ENCODE measurements at regions of chr17 and their contacts with region 1.

Region 1: DNA sequence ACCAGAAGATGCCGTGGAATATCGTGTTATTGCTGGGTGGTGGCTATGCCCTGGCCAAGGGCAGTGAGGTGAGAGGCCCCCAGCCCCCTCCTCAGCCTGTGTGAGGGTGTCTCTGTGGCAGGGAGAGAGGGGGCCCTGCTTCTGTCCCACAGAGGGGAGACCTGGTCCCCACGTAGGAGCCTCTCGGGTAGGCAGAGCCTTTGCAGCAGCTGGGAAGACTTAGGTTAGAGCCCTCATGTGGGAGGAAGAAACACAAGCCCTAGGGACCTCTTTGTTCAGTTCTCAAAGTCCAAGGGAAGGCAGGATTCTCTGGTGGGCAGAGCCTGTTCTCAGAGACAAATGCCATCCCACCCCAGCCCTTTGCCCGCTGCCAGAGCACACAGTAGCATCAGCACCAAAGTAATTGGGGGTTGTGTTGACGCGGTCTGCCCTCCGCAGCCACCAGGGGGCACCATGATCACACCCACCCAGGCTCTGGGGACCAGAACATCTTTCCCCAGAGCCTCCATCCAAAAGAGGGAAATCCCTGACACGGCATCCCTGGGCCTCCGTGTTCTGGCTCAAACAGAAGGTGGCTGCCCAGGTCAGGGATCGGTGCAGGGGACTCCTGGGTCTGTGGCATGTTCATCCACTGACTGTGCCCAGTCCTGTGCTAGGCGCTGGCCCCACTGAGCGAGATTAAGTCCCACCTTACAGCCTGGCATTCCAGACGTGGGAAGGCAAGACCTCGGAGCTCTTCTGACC is 11.5 kb upstream of the FOXN1 start:
- DNase-seq: peak; percentile 60 to 88 (median 79)
- ATAC-seq: peak; percentile 91
- H3K4me3 ChIP-seq: no peak overlapping the region
- H3K4me3 Mint-ChIP-seq: no peak overlapping the region
- H3K27ac ChIP-seq: no peak overlapping the region
- H3K27ac Mint-ChIP-seq: no peak overlapping the region
- H3K4me1 ChIP-seq: no peaks in the 10 kb centered on the region
- H3K4me1 Mint-ChIP-seq: no peaks in the 10 kb centered on the region
- H3K27me3 ChIP-seq: no peaks in the 10 kb centered on the region
- H3K27me3 Mint-ChIP-seq: peaks cover 4% of the 10 kb centered on the region
- CTCF ChIP-seq: peak; percentile 71

Region 2: DNA sequence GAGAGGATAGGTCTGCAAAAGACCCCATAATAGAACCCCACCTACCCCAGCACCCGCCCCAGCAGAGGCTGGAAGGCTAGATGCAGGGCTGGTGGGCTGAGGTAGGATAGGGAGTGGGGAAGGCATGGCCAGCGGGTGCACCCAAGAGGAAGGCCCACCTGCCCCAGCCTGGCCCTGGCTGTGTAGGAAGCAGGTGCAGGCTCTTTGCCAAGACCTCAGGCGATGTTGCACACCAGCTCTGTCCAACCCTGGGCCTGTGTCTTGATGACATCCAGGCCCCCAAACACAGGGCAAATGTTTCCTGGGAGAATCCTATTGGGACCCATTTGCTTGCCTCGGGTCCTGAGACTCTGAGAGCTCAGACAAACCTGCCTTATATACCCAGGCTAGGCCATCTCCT is 45.6 kb after region 1 on chr17:
- CTCF ChIA-PET with region 1: interaction called, 28 read pairs
- POLR2A ChIA-PET with region 1: no interaction called
- intact Hi-C with region 1: loop called (anchors 1 to 2 kb)
- DNase-seq: no peak
- ATAC-seq: no peak
- H3K4me3 ChIP-seq: no peak overlapping the region
- H3K4me3 Mint-ChIP-seq: no peak overlapping the region
- H3K27ac ChIP-seq: no peak overlapping the region
- H3K27ac Mint-ChIP-seq: no peak overlapping the region
- H3K4me1 ChIP-seq: no peaks in the 10 kb centered on the region
- H3K4me1 Mint-ChIP-seq: no peaks in the 10 kb centered on the region
- H3K27me3 ChIP-seq: no peaks in the 10 kb centered on the region
- H3K27me3 Mint-ChIP-seq: no peaks in the 10 kb centered on the region
- CTCF ChIP-seq: no peak

Region 3: DNA sequence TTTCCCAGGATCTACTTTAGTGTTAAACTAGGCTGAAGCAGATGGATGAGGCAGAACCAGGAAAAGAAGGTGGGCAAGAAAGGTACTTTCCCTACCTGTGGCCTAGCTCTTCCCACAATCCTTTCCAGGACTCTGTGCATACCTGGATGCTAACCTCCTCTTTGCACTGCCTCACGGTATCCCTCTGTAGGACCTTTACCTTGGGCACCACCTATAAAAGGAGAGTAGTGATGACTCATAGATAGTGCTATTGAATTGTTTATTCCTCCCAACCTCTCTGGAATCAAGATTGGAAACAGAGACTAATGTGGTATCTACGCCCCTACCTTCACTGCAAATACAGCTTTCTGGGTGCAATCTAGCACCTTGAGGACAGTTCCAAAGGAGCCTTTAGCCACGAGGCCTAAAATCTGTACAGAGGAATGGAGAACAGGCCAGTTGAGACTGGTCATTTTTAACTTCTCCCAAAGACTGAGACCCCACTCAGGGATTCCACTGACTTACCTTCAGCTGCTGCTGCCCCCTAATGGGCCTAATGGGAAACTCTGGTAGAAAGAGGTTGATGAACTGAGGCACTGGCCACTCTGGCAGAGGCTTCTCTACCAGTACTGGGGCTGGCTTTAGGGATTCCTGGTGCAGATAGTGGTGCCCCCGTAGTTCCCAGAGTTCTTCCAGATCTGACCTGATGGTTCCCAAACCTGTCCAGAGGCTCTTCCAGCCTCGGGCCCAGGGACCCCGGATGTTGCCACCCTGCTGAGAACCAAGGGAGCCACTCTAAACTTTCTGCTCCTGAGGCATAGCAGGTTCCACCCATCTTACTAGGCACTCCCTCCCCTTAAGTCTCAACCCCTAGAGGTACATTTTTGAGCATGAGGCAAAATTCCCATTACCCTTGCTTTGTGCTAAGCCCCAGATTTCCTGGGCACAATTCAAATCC is 118.6 kb after region 1 on chr17:
- CTCF ChIA-PET with region 1: interaction called, 89 read pairs
- POLR2A ChIA-PET with region 1: no interaction called
- intact Hi-C with region 1: loop called in 1 of 2 experiments (anchors 1 kb)
- DNase-seq: peak in 8 of 9 experiments; percentile 7 to 62 (median 44)
- ATAC-seq: peak; percentile 57
- H3K4me3 ChIP-seq: no peak overlapping the region
- H3K4me3 Mint-ChIP-seq: no peak overlapping the region
- H3K27ac ChIP-seq: no peak overlapping the region
- H3K27ac Mint-ChIP-seq: no peak overlapping the region
- H3K4me1 ChIP-seq: no peaks in the 10 kb centered on the region
- H3K4me1 Mint-ChIP-seq: peaks cover 3% of the 10 kb centered on the region
- H3K27me3 ChIP-seq: no peaks in the 10 kb centered on the region
- H3K27me3 Mint-ChIP-seq: no peaks in the 10 kb centered on the region
- CTCF ChIP-seq: peak; percentile 74

Region 4: DNA sequence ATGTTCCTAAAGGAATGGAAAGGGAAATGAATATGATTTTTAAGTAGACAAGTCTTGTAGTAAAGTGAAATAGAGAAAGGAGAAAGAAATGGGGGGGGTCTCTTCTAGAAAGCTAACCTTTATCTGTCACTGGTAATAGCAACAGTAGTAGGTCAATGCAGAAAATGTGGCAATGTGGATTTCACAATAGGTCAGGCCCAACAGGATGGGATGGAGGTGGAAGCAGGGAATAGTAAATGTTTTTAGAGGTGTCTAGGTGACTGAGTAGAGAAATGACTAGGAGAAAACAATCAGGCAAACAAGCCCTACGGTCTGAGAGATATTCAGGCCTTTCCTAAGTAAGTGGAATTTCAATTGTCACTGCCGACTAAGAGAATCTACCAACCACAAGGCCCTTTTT is 125.4 kb after region 1 on chr17:
- CTCF ChIA-PET with region 1: interaction called, 23 read pairs
- POLR2A ChIA-PET with region 1: no interaction called
- intact Hi-C with region 1: no loop called
- DNase-seq: no peak
- ATAC-seq: no peak
- H3K4me3 ChIP-seq: no peak overlapping the region
- H3K4me3 Mint-ChIP-seq: no peak overlapping the region
- H3K27ac ChIP-seq: no peak overlapping the region
- H3K27ac Mint-ChIP-seq: peak overlapping the region; percentile 41
- H3K4me1 ChIP-seq: no peaks in the 10 kb centered on the region
- H3K4me1 Mint-ChIP-seq: peaks cover 2% of the 10 kb centered on the region
- H3K27me3 ChIP-seq: no peaks in the 10 kb centered on the region
- H3K27me3 Mint-ChIP-seq: no peaks in the 10 kb centered on the region
- CTCF ChIP-seq: no peak

Measured in CD8-positive, alpha-beta T cell (primary cell).